GM10248 (cell line): ENCODE measurements at regions of chr13 and their contacts with region 1.

Region 1: GRCh38 chr13:38494445-38494844 is 144.8 kb downstream of the UFM1 start:
- DNase-seq: no peak
- CTCF ChIP-seq: no peak

Region 2: GRCh38 chr13:38483623-38484022 is 10.8 kb before region 1 on chr13:
- CTCF ChIA-PET with region 1: interaction called, 10 read pairs
- POLR2A ChIA-PET with region 1: no interaction called
- DNase-seq: no peak
- CTCF ChIP-seq: no peak

Region 3: GRCh38 chr13:38538422-38538821 is 44.0 kb after region 1 on chr13:
- CTCF ChIA-PET with region 1: no interaction called
- POLR2A ChIA-PET with region 1: no interaction called
- DNase-seq: no peak
- CTCF ChIP-seq: no peak